GM10248 (cell line): ENCODE measurements at regions of chr22 and their contacts with region 1.

Region 1: DNA sequence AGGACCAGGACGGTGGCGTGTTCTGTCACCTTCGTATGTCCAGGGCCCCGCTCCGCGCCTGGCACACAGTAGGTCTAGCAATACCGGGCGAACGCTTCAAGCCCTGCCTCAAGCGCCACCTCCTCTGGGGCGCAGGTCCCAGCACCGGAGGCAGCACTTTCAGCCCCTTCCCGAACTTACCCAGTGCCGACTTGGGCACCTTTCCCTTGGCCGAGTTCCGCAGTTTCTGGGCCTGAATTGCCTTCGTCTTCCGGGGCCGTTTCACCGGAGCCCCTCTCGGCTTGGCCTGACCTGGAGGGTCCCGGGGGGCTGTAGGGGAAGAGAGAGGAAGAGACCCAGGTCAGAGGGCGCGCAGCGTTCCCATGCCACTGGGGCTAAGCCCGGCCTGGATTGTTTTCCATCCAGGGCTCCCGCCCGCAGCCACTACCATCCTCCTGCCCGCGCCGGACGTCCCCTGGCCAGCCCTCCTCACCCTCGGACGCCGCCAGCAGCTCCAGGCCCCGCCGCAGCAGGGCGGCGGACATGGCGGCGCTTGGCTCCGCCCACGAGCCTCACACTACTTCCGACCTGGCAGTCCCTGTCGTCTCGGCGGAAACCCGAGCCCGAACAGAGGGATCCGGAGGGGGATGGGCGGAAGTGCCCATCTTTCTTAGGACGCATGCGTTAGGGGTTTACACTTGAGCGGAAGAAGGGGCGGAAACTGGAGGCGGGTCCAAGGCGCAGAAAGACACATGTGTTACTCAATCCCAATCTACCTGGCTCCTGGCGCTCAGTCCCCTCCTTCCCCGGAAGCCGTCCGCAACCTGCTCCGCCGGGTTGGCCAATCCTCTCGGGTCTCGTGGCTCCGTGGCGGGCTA is at the start of gene RPS19BP1:
- DNase-seq: peak; percentile 96
- CTCF ChIP-seq: no peak

Region 2: DNA sequence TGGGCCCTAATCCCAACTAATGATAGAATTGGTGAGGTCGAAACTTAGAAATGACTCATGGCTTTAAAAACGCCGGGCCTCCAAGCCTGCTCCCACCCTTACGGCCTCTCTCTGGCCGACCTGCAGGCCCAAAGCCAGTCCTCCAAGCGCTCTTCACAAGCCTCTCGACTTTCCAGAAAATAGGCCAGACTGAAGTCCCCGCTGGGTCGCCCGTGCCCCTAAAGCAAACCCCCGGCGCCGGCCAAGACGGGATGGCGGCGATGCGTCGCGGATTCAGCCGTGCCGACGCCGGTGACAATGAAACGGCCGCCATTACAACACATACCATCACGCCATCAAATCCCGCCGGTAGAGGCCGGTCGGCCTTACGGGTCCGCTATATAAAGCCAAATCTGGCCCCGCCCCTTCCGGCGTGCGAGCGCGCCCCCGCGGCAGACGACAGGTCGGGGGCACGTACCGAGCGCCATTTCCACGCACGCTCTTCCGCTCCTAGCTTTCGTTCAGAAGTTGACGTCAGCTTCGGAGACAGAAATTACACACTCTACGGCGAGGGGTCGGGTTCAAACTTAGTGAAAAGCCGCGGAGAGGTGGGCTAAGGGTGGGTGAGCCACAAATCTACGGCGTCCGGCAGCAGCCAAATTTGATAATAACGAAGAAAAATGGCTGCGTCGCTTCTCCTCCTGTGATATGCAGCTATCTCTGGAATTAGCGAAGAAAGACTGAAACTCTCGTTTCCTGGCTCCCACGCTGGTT is 213.0 kb before region 1 on chr22 and contains the start of gene RPL3:
- CTCF ChIA-PET with region 1: interaction called, 47 read pairs
- POLR2A ChIA-PET with region 1: interaction called, 35 read pairs
- DNase-seq: peak; percentile 98
- CTCF ChIP-seq: no peak

Region 3: GRCh38 chr22:39490135-39490798 is 42.2 kb before region 1 on chr22:
- CTCF ChIA-PET with region 1: interaction called, 115 read pairs
- POLR2A ChIA-PET with region 1: interaction called, 3 read pairs
- DNase-seq: peak; percentile 90
- CTCF ChIP-seq: no peak

Region 4: GRCh38 chr22:39502109-39502788 is 30.2 kb before region 1 on chr22 and contains the start of gene MIEF1:
- CTCF ChIA-PET with region 1: interaction called, 82 read pairs
- POLR2A ChIA-PET with region 1: no interaction called
- DNase-seq: peak; percentile 98
- CTCF ChIP-seq: no peak

Region 5: GRCh38 chr22:39520054-39520891 is 12.2 kb before region 1 on chr22 and contains the start of gene ATF4:
- CTCF ChIA-PET with region 1: interaction called, 49 read pairs
- POLR2A ChIA-PET with region 1: interaction called, 25 read pairs
- DNase-seq: peak; percentile 97
- CTCF ChIP-seq: no peak

Region 6: GRCh38 chr22:39592134-39593065 is 60.0 kb after region 1 on chr22:
- CTCF ChIA-PET with region 1: no interaction called
- POLR2A ChIA-PET with region 1: no interaction called
- DNase-seq: no peak
- CTCF ChIP-seq: no peak

Region 7: DNA sequence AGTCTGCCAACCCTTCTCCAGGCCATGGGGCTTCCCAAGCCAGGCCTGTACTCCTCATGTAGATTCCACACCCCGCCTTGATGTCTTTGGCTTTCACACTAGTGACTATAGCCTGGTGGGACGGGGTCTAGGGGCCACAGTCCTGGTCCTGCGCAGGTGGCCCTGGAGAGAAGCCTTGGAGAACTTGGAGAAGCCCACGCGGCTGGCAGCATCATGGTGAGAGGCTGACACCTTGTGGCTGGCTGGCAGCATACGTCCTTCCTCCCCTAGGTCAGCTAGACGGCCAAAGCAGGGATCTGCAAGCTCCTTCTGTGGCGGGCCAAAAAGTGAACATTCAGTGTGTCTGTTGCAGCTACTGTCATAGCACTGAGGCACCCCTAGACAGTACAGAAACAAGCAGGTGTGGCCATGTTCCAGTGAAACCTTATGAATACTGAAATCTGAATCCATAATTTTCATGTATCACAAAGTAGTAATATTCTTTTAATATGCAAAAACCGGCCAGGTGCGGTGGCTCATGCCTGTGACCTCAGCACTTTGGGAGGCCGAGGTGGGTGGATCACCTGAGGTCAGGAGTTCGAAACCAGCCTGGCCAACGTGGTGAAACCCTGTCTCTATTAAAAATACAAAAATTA is 504.3 kb after region 1 on chr22:
- CTCF ChIA-PET with region 1: interaction called, 419 read pairs
- POLR2A ChIA-PET with region 1: no interaction called
- DNase-seq: peak; percentile 72
- CTCF ChIP-seq: peak; percentile 85